ENCODE measurements at regions of chrX and their contacts with region 1.

Region 1: GRCh38 chrX:52995135-52996020 is 37.1 kb upstream of the FAM156A start:
- DNase-seq: peak; percentile 93
- H3K4me3 Mint-ChIP-seq: peak overlapping the region; percentile 94
- H3K27ac Mint-ChIP-seq: peak overlapping the region; percentile 97
- H3K4me1 Mint-ChIP-seq: peaks cover 28% of the 10 kb centered on the region
- H3K27me3 Mint-ChIP-seq: no peaks in the 10 kb centered on the region

Region 2: DNA sequence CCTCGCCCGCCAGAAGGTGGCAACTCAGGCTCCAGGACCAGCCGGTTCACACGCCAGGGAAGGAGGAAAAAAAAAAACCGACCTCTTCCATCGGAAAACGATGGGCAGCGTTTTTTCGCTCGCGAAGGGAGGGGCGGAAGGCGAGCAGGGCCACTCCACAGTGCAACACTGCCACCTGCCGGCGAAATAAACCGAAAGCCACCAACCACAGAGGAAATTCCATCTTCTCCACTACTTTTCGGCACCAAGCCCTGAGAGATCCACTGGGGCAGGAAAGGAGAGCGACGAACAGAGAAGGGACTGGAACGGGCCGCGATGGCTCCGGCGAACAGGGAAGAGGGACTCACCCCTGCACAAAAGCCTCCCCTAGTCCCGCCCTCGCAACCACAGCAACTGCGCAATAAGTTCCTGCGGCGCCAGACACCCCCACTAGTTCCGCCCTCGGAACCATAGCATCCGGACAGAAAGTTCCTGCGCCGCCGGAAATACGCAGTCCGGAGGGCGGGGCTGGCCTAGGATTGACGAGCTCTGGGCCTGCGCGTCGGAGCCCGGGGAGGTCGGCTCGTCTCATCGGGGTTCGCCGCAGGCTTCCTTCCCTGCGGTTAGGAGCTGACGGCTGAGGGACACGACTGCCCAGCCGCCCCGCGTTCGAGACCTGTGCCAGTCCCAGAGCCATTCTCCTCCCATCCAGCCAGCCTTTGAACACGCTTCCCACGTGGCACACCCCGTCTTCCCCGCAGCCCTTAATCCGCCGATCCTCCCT is 60.5 kb before region 1 on chrX:
- CTCF ChIA-PET with region 1: interaction called, 12 read pairs
- POLR2A ChIA-PET with region 1: interaction called, 3 read pairs
- DNase-seq: peak; percentile 92
- H3K4me3 Mint-ChIP-seq: peak overlapping the region; percentile 82
- H3K27ac Mint-ChIP-seq: peak overlapping the region; percentile 94
- H3K4me1 Mint-ChIP-seq: peaks cover 8% of the 10 kb centered on the region
- H3K27me3 Mint-ChIP-seq: no peaks in the 10 kb centered on the region

Region 3: DNA sequence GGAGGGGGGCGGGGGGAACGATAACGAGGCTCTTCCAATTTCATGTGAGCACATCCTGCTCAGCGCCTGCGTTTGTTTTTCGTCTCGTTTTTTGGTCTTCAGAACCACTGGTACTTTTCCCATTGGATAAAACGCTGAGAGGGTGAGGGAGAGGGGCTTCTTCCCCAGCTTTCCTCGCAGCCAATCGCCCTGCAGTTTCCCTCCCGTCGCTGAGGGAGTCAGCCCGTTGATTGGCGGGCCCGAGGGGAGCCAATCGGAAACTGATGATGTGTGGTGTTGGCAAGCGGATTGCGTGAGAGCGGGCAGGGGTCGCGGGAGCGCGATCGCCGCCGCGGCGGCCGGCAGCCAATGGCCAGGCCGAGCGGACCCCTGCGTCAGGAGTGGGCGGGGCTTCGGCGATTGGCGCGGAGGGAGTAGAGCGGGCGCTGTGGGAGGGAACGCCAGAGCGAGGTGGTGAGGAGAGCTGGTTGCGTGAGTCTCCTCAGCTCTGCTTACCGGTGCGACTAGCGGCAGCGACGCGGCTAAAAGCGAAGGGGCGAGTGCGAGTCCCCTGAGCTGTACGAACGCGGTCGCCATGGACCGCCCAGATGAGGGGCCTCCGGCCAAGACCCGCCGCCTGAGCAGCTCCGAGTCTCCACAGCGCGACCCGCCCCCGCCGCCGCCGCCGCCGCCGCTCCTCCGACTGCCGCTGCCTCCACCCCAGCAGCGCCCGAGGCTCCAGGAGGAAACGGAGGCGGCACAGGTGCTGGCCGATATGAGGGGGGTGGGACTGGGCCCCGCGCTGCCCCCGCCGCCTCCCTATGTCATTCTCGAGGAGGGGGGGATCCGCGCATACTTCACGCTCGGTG is 86.8 kb after region 1 on chrX and contains the start of gene TSPYL2:
- CTCF ChIA-PET with region 1: no interaction called
- POLR2A ChIA-PET with region 1: interaction called, 11 read pairs
- DNase-seq: peak; percentile 93
- H3K4me3 Mint-ChIP-seq: peak within 1 kb of the TSS; percentile 81
- H3K27ac Mint-ChIP-seq: peak within 1 kb of the TSS; percentile 82
- H3K4me1 Mint-ChIP-seq: peaks cover 40% of the 10 kb centered on the region
- H3K27me3 Mint-ChIP-seq: no peaks in the 10 kb centered on the region
- total RNA-seq, gene TSPYL2: 30.2 to 31.1 TPM

Region 4: GRCh38 chrX:53093748-53094583 is 98.6 kb after region 1 on chrX and contains the start of gene KANTR:
- CTCF ChIA-PET with region 1: no interaction called
- POLR2A ChIA-PET with region 1: no interaction called
- DNase-seq: peak; percentile 82
- H3K4me3 Mint-ChIP-seq: peak within 1 kb of the TSS; percentile 87
- H3K27ac Mint-ChIP-seq: peak within 1 kb of the TSS; percentile 85
- H3K4me1 Mint-ChIP-seq: peaks cover 22% of the 10 kb centered on the region
- H3K27me3 Mint-ChIP-seq: no peaks in the 10 kb centered on the region
- total RNA-seq, gene KANTR: 7.5 to 7.7 TPM

Region 5: GRCh38 chrX:53233536-53233935 is 238.2 kb after region 1 on chrX:
- CTCF ChIA-PET with region 1: no interaction called
- POLR2A ChIA-PET with region 1: no interaction called
- DNase-seq: no peak
- H3K4me3 Mint-ChIP-seq: no peak overlapping the region
- H3K27ac Mint-ChIP-seq: no peak overlapping the region
- H3K4me1 Mint-ChIP-seq: no peaks in the 10 kb centered on the region
- H3K27me3 Mint-ChIP-seq: no peaks in the 10 kb centered on the region